Ascending aorta (tissue), 2 donors: ENCODE measurements at regions of chrX and their contacts with region 1.

Region 1: DNA sequence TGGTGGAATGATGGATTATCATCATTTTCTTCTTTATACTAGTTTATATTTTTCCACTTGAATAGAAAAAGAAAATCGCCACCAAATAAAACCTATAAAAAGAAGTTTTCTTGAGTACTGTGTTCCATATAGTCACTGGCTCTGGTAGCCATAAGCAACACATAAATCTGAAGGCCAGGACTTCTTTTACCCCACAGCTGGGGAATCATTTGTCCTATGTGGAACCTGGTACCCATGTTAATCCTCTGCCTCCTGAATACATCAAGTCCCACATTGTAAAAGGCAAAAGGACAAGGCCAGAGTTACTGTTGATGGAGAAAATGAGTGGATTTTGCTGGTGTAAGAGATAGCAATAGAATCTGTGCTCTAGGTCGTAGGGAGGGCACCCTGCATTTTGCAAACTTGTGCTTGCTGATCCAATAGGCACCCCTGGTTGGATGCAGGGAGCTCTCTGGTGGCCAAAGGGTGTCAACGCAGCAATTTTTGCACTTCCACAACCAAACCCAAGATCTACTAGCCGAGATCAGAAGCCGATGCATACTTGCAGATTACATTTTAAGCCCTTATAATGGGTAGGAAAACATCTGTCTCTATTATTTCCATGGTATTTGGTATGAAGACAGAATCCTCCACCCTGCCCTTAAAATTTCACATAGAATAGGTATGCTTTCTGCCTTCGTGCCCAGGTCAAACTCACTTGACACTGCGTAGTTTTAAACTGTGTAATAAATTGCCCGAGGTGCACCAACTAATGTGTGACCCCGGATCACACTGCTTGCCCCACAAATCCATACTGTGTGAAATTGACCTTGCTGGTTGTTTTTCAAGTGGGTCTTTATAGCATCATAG is 146.2 kb upstream of the SCML1 start:
- DNase-seq: peak in 1 of 2 donors; percentile 80
- H3K4me3 ChIP-seq: peak overlapping the region; percentile 24 to 32
- H3K27ac ChIP-seq: peak overlapping the region; percentile 76 to 77
- H3K4me1 ChIP-seq: peaks cover 4 to 21% of the 10 kb centered on the region in 2 donors
- H3K27me3 ChIP-seq: no peaks in the 10 kb centered on the region
- CTCF ChIP-seq: peak; percentile 52 to 64 (median 53)

Region 2: GRCh38 chrX:16786139-16786790 is 804.9 kb before region 1 on chrX and contains the start of gene TXLNG:
- intact Hi-C with region 1: no loop called
- DNase-seq: peak; percentile 99 to 100
- H3K4me3 ChIP-seq: peak within 1 kb of the TSS; percentile 87 to 89
- H3K27ac ChIP-seq: peak within 1 kb of the TSS; percentile 88 to 90
- H3K4me1 ChIP-seq: peaks cover 0 to 11% of the 10 kb centered on the region in 2 donors
- H3K27me3 ChIP-seq: no peaks in the 10 kb centered on the region
- CTCF ChIP-seq: no peak
- total RNA-seq, gene TXLNG: 3.9 TPM

Region 3: DNA sequence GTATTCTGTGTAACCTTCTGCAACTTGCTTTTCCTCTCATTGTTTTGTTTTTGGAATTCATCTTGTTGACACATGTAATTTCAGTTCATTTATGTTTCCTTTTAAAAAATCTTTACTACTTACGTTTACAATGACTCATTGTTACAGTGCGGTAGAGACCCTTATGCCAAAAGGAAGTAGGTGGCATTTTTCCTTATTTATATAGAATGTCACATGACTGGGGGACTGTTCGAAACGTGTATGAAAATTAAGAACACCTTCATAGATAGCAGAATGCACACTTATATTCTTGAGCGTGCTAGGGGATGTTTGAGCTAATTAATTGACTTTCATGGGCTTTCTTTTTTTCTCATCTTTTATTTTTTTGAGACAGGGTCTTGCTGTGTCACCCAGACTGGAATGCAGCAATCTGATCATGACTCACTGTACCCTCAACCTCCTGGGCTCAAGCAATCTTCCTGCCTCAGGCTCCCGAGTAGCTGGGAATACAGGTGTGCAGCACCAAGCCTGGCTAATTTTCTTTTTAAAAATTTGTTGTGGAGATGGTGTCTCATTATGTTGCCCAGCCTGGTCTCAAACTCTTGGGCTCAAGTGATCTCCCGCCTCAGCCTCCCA is 637.4 kb before region 1 on chrX:
- intact Hi-C with region 1: no loop called
- DNase-seq: no peak
- H3K4me3 ChIP-seq: no peak overlapping the region
- H3K27ac ChIP-seq: no peak overlapping the region
- H3K4me1 ChIP-seq: no peaks in the 10 kb centered on the region
- H3K27me3 ChIP-seq: no peaks in the 10 kb centered on the region
- CTCF ChIP-seq: no peak

Region 4: GRCh38 chrX:17242470-17242869 is 348.6 kb before region 1 on chrX:
- intact Hi-C with region 1: loop called (anchors 1 kb)
- DNase-seq: peak in 1 of 2 donors; percentile 68
- H3K4me3 ChIP-seq: no peak overlapping the region
- H3K27ac ChIP-seq: no peak overlapping the region
- H3K4me1 ChIP-seq: no peaks in the 10 kb centered on the region
- H3K27me3 ChIP-seq: no peaks in the 10 kb centered on the region
- CTCF ChIP-seq: peak; percentile 57 to 75 (median 70)

Region 5: DNA sequence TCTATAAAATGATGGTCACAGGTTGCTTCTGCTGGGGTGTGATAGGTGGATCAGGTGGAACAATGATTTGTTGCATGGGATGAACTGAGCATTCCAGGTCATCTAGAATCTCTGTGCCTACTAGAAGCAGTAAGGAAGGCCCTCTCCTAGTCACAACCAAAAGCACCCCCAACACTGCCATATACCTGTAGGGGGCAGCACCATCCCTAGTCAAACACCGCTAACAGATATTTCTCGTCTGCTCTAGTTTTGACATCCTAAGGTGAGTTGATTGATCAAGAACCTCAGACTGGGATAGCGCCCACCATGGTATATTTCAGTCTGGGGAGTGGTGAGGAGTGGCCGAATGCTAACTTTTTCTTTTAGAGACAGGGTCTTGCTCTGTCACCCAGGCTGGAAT is 55.9 kb before region 1 on chrX:
- intact Hi-C with region 1: loop called (anchors 2 kb)
- DNase-seq: peak in 1 of 2 donors; percentile 64
- H3K4me3 ChIP-seq: no peak overlapping the region
- H3K27ac ChIP-seq: no peak overlapping the region
- H3K4me1 ChIP-seq: no peaks in the 10 kb centered on the region
- H3K27me3 ChIP-seq: no peaks in the 10 kb centered on the region
- CTCF ChIP-seq: peak; percentile 14 to 41 (median 24)

Region 6: GRCh38 chrX:17553469-17553868 is 37.6 kb before region 1 on chrX:
- intact Hi-C with region 1: loop called (anchors 2 kb)
- DNase-seq: peak; percentile 11 to 75
- H3K4me3 ChIP-seq: no peak overlapping the region
- H3K27ac ChIP-seq: peak overlapping the region; percentile 43 to 68
- H3K4me1 ChIP-seq: peaks cover 12 to 22% of the 10 kb centered on the region in 2 donors
- H3K27me3 ChIP-seq: no peaks in the 10 kb centered on the region
- CTCF ChIP-seq: no peak

Region 7: DNA sequence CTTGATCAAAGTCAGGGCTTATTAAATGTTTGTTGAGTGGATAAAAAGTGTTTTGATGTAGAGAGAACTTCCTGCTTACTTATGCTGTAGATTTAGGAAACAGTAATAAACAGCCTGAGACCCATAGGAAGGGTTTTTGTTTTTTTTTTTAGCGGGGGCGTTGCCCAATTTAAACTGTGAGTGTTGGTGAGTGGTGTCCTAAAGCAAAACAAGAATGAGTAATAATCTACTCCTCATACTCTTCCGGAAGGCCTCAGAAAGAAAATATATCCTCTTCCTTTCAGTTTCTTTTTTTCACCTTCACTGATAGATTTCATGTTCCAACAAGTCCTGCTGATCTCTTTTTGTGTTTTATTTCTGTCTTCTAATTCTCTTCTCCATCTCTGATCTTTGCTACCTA is 41.8 kb after region 1 on chrX:
- intact Hi-C with region 1: loop called (anchors 5 kb)
- DNase-seq: no peak
- H3K4me3 ChIP-seq: no peak overlapping the region
- H3K27ac ChIP-seq: peak overlapping the region; percentile 51 to 69
- H3K4me1 ChIP-seq: peaks cover 4 to 7% of the 10 kb centered on the region in 2 donors
- H3K27me3 ChIP-seq: no peaks in the 10 kb centered on the region
- CTCF ChIP-seq: no peak